SK-N-SH (cell line): ENCODE measurements at regions of chr19 and their contacts with region 1.

Region 1: DNA sequence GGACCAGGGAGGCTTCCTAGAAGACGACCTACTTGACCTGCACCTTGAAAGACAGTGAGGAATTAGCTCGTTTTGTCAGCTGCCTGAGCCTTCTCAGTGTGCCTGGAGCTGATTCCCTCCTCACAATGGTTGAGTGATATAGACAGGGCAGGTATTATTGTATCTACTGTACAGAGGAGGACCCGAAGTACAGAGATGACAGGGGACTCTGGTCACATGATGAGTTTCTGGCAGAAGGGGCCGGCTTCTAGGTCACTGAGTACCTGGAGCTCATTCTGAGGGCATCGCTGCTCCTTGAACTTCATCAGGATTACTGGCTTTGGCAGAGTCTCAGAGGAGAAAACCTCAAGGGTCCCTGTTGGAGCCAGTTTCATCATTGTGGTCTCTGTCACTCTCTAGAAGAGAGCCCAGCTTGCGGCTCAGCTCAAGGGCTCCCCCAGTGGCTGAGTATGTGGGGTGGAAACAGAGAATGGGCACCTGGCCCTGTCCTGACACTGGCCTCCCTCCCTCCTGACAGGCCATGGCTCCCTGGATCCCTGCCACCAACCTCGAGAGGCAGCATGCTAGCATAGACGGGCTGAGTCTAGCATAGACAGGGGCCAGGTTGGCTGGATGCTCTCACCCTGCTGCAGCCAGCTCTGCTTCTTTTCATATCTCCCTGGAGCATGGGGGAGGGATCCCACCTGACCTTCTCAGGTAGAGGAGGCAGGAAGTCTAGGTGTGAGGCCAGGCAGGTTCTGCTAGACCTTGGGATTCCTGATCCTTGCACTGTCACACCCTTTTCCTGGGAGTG is 38.7 kb downstream of the NFIX start:
- DNase-seq: peak; percentile 77
- H3K4me3 ChIP-seq: peak overlapping the region in 1 of 2 experiments; percentile 13; a peak in 1 of 4 replicates
- H3K27ac ChIP-seq: peak overlapping the region in 1 of 2 experiments; percentile 43; a peak in 1 of 4 replicates
- H3K4me1 ChIP-seq: peaks cover 45 to 55% of the 10 kb centered on the region in 2 experiments
- H3K27me3 ChIP-seq: no peaks in the 10 kb centered on the region
- CTCF ChIP-seq: peak; percentile 69
- EP300 ChIP-seq: no peak
- RAD21 ChIP-seq: peak; percentile 63

Region 2: GRCh38 chr19:12974301-12975220 is 59.5 kb before region 1 on chr19:
- CTCF ChIA-PET with region 1: interaction called, 14 read pairs
- POLR2A ChIA-PET with region 1: interaction called, 4 read pairs
- DNase-seq: peak; percentile 78
- H3K4me3 ChIP-seq: no peak overlapping the region
- H3K27ac ChIP-seq: peak overlapping the region in 1 of 2 experiments; percentile 92; a peak in 2 of 4 replicates
- H3K4me1 ChIP-seq: peaks cover 2 to 27% of the 10 kb centered on the region in 2 experiments; a peak in 2 of 4 replicates
- H3K27me3 ChIP-seq: no peaks in the 10 kb centered on the region
- CTCF ChIP-seq: no peak
- EP300 ChIP-seq: peak in 1 of 2 experiments; percentile 84; a peak in 2 of 4 replicates
- RAD21 ChIP-seq: peak; percentile 28

Region 3: GRCh38 chr19:13007292-13008045 is 26.5 kb before region 1 on chr19:
- CTCF ChIA-PET with region 1: interaction called, 23 read pairs
- POLR2A ChIA-PET with region 1: no interaction called
- DNase-seq: peak; percentile 42
- H3K4me3 ChIP-seq: no peak overlapping the region
- H3K27ac ChIP-seq: no peak overlapping the region
- H3K4me1 ChIP-seq: no peaks in the 10 kb centered on the region
- H3K27me3 ChIP-seq: no peaks in the 10 kb centered on the region
- CTCF ChIP-seq: peak; percentile 20; the same call in 1 of the 2 replicates
- EP300 ChIP-seq: no peak
- RAD21 ChIP-seq: no peak

Region 4: GRCh38 chr19:13044231-13044836 is 10.3 kb after region 1 on chr19:
- CTCF ChIA-PET with region 1: interaction called, 16 read pairs
- POLR2A ChIA-PET with region 1: no interaction called
- DNase-seq: no peak
- H3K4me3 ChIP-seq: no peak overlapping the region
- H3K27ac ChIP-seq: no peak overlapping the region
- H3K4me1 ChIP-seq: peaks cover 9 to 24% of the 10 kb centered on the region in 2 experiments; a peak in 2 of 4 replicates
- H3K27me3 ChIP-seq: no peaks in the 10 kb centered on the region
- CTCF ChIP-seq: no peak
- EP300 ChIP-seq: no peak
- RAD21 ChIP-seq: no peak

Region 5: DNA sequence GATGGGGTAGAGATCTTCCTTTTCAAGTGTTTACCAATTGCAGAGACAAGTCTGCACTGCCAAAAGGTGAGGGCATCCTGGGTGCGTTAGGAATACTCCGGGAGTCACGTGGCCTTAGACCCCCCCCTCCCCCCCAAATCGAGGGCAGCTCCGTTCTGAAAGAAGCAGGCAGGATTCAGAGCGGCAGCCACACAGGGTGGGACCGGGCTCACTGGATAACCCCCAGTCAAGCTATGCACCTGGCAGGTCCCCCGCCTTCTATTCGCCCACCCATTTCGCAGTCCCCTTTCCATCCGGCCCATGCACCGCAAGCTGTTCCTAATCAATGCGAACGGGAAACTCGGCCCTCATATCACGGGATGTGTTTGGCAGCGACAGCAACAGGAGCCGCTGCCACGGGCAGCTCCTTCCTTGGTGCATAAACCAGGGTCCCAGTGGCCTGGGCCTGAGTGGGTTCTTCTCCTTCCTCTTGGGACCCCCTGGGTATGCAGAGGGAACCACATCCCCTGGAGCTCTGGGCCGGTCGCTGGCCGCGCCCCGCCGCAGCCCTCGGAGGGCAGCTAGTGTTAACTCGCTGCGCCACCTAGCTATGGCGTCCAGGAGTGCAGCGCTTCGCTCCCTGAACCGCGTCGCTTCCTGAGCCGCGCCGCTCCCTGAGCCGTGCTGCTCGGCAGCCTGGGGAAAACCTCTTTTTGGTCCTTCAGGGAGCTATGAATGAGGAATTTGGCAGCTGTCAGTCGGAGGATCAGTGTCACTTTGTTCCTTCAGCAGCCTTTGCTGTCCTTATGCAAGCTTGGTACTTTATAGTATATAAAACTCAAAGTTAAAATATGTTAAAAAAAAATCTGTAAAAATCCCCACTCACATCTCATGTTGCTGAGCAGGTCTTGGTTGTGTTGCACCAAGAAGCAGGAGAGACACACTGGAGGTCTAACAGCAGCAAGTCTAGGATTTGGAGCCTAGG is 27.2 kb after region 1 on chr19:
- CTCF ChIA-PET with region 1: interaction called, 167 read pairs
- POLR2A ChIA-PET with region 1: no interaction called
- DNase-seq: peak; percentile 92
- H3K4me3 ChIP-seq: peak overlapping the region; percentile 37 to 58; a peak in 3 of 4 replicates
- H3K27ac ChIP-seq: peak overlapping the region; percentile 52 to 85; a peak in 3 of 4 replicates
- H3K4me1 ChIP-seq: peaks cover 49 to 89% of the 10 kb centered on the region in 2 experiments
- H3K27me3 ChIP-seq: no peaks in the 10 kb centered on the region
- CTCF ChIP-seq: peak; percentile 94
- EP300 ChIP-seq: no peak
- RAD21 ChIP-seq: peak; percentile 91

Region 6: DNA sequence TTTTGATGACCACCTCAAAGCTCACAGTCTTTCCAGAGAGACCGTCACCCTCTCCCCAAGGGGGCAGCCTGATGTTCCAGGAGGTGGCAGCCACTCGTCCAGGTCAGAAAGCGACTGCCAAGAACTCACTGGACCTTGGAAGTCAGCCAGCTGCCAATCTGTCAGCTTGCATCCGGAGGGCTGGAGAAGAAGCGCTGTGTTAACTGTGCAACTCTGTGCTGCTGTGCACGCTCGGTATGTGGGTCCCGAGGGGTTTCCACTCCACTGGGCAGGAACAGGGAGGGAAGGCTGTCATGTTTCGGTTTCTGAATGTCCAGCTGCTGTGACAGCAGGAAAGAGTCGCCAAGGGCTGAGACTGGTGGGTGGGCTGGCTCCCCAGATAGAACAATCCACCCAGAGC is 383.0 kb after region 1 on chr19:
- CTCF ChIA-PET with region 1: no interaction called
- POLR2A ChIA-PET with region 1: no interaction called
- DNase-seq: no peak
- H3K4me3 ChIP-seq: no peak overlapping the region
- H3K27ac ChIP-seq: no peak overlapping the region
- H3K4me1 ChIP-seq: no peaks in the 10 kb centered on the region
- H3K27me3 ChIP-seq: peaks cover 65% of the 10 kb centered on the region
- CTCF ChIP-seq: no peak
- EP300 ChIP-seq: no peak
- RAD21 ChIP-seq: no peak